ENCODE measurements at regions of chr16 and their contacts with region 1.

Region 1: GRCh38 chr16:88856828-88857733 is at the starts of genes GALNS and TRAPPC2L:
- DNase-seq: peak; percentile 98
- H3K4me3 Mint-ChIP-seq: peak within 1 kb of the TSS; percentile 96
- H3K27ac Mint-ChIP-seq: peak within 1 kb of the TSS; percentile 88
- H3K4me1 Mint-ChIP-seq: peaks cover 25% of the 10 kb centered on the region
- H3K27me3 Mint-ChIP-seq: no peaks in the 10 kb centered on the region
- total RNA-seq, gene GALNS: 21.9 and 23.8 TPM in 2 replicates
- total RNA-seq, gene TRAPPC2L: 63.1 and 65.4 TPM in 2 replicates

Region 2: DNA sequence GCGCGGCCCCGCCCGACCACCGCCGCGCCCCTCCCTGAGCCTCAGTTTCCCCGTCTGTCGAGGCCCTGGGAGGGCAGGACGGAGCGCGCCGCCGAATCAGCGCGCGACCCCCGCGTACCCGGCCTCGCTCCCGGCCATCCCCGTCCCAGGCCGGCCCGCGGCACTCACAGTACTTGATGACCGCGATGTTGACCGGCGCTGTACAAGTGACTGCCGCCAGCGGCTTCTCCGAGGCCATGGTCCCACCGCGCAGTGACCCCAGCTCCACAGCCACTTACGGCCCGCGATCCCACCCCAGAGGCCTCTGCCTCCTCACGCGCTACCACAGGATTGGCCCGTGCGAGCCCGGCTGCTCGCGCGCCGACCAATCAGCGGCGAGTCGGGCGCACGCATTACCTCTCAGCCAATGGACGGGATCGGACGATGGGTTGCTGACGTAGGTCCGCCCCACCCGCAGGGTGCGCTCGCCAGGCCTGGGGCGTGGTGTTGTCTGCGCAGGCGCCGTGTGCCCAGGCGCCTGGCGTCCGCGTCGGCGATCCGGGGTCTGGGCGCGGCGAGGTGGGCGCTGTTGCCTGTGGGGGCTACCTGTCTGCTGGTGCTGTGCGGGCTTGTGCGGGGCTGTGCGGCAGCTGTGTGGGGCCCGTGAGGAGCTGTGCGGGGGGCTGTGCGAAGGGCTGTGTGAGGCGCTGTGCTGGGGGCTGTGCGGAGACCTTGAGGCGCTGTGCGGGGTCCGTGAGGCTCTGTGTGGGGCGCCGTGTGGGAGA is 194.1 kb before region 1 on chr16 and contains the start of gene MVD:
- intact Hi-C with region 1: loop called (anchors 5 kb)
- DNase-seq: peak; percentile 96
- H3K4me3 Mint-ChIP-seq: peak within 1 kb of the TSS; percentile 88
- H3K27ac Mint-ChIP-seq: peak within 1 kb of the TSS; percentile 84
- H3K4me1 Mint-ChIP-seq: peaks cover 20% of the 10 kb centered on the region
- H3K27me3 Mint-ChIP-seq: no peaks in the 10 kb centered on the region
- total RNA-seq, gene MVD: 88.8 and 90.0 TPM in 2 replicates

Region 3: DNA sequence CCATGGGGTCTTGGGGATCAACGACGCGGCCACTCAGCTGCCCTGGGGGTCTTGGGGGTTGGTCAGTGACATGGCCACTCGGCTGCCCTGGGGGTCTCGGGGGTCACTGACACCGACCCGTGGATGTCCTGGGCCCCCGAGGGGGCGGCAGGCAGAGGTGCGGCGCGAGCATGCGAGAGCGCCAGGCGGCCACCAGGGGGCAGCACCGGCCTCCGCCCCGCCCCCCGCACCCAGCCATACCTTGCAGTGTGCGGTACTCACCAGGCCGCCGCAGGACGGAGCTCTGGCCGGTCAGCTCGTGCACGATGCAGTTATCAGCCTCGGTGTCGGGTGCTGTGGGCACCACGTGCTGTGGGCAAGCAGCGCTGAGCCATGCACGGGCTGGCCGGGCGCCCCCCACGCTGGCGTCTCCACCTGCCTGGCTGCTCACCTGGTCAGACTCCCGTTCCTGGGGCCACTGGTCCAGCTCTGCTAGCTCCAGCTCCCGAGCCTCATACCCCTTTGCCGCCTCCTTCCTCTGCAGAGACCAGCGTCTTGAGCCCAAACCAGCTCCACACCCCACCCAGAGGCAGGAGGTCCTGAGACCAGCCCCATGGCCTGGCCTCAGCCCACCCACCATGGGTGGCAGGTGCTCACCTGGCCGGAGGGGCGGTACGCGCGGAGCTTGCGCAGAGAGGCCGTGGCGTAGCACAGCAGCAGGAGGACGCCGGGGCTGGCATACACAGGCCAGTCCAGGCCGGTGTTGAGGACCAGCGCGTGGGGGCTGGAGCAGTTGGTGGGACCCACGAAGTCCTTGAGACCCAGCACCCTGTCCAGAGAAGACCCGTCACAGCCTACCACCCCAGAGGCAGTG is 119.6 kb before region 1 on chr16:
- intact Hi-C with region 1: loop called (anchors 1 kb)
- DNase-seq: peak; percentile 49
- H3K4me3 Mint-ChIP-seq: no peak overlapping the region
- H3K27ac Mint-ChIP-seq: no peak overlapping the region
- H3K4me1 Mint-ChIP-seq: no peaks in the 10 kb centered on the region
- H3K27me3 Mint-ChIP-seq: no peaks in the 10 kb centered on the region

Region 4: DNA sequence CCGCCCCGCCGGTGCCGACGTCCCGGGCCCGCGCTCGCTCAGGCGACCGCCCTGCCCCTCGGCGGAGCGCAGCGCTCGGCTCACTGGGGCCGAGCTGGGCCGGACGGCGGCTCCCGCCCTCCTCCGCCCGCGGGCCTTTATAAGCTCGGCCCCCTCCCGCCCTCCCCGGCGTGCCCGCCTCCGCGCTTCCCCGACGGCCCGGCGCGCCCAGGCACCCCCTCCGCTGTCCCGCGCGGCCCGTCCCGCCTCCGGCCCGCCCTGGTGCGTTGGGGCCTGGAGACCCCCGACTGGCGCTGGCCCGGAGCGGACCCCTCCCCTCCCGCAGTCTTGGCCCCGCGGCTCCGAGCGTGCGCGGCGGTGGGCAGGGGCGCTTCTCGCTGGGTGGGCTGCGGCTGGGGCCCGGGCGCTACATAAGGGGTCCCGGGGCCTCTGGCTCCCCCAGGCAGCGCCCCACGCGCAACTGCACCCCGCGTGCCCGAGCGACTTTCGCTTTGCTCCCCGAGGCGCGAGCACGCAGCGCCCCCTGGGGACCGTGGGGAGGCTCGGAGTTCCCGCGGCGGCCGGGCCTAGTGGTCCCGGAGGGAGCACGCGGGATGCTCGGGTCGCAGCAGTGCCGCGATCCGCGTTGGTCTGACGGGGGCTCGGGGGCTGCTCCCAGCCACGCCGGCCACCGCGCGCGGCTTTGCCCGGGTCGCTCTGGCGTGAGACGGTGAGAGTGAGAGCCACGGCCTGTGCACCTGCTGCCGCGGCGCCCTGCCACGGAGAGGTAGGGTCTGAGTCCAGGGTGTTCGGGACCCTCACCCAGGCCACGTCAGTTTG is 71.8 kb before region 1 on chr16 and contains the start of gene PIEZO1:
- intact Hi-C with region 1: loop called (anchors 1 kb)
- DNase-seq: peak; percentile 80
- H3K4me3 Mint-ChIP-seq: peak within 1 kb of the TSS; percentile 82
- H3K27ac Mint-ChIP-seq: peak within 1 kb of the TSS; percentile 87
- H3K4me1 Mint-ChIP-seq: peaks cover 43% of the 10 kb centered on the region
- H3K27me3 Mint-ChIP-seq: peaks cover 4% of the 10 kb centered on the region
- total RNA-seq, gene PIEZO1: 214 and 217 TPM in 2 replicates

Region 5: DNA sequence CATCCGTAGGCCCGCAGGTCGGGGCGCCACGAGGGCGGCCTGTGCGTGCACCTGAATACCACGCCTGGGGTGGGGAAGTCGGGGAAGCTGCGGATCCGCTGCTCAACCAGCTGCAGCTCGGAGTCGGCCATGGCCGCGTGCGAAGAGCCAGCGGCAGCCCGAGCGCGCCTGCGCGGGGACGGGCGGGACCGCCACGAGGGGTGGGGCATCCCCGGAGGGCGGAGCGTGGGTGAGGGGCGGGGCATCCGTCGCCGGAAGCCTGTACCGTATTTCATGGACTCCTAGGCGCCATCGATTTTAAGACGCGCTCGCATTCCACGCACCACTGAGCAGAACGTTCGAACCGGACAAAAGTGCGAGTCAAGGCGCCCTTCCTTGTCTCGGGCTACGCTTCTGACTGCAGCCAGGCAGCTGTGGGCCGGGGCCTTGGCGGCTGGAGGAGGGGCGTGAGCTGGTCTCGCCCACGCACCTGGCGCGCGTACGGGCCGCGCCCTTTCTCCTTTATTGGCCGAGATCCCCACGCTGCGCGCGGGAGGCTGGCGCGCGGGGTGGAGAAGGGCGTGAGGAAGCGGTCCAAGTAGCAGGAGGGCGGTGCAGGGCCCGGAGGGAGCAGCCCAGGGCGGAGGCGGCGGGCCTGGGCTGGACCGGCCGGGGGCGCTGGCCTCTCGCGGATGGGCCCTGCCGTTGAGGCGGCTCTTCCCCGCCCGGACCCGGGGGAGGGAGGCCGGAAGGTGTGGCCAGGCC is 45.1 kb before region 1 on chr16 and contains the start of gene APRT:
- intact Hi-C with region 1: loop called (anchors 1 kb)
- DNase-seq: peak; percentile 97
- H3K4me3 Mint-ChIP-seq: peak within 1 kb of the TSS; percentile 90
- H3K27ac Mint-ChIP-seq: peak within 1 kb of the TSS; percentile 98
- H3K4me1 Mint-ChIP-seq: peaks cover 11% of the 10 kb centered on the region
- H3K27me3 Mint-ChIP-seq: no peaks in the 10 kb centered on the region
- total RNA-seq, gene APRT: 301 and 303 TPM in 2 replicates

Region 6: GRCh38 chr16:89115216-89115861 is 258.3 kb after region 1 on chr16:
- intact Hi-C with region 1: loop called (anchors 1 kb)
- DNase-seq: peak; percentile 83
- H3K4me3 Mint-ChIP-seq: peak overlapping the region; percentile 79
- H3K27ac Mint-ChIP-seq: peak overlapping the region; percentile 90
- H3K4me1 Mint-ChIP-seq: peaks cover 29% of the 10 kb centered on the region
- H3K27me3 Mint-ChIP-seq: no peaks in the 10 kb centered on the region

Region 7: GRCh38 chr16:89490387-89491237 is 633.5 kb after region 1 on chr16 and contains the start of gene ANKRD11:
- intact Hi-C with region 1: loop called (anchors 2 kb)
- DNase-seq: peak; percentile 99
- H3K4me3 Mint-ChIP-seq: peak within 1 kb of the TSS; percentile 96
- H3K27ac Mint-ChIP-seq: peak within 1 kb of the TSS; percentile 99
- H3K4me1 Mint-ChIP-seq: peaks cover 52% of the 10 kb centered on the region
- H3K27me3 Mint-ChIP-seq: no peaks in the 10 kb centered on the region
- total RNA-seq, gene ANKRD11: 176 and 179 TPM in 2 replicates

Measured in activated T-helper 1 cell treated with anti-CD3 and anti-CD28 coated beads, Interleukin-12 subunit alpha, Interleukin-12 subunit beta, Interleukin-2, Interleukin-4 antibody, amounts not matched to agents 30 ng/mL and 10 ng/mL and 1 ng/mL, durations not matched to agents 14 hours and 24 hours and 36 hours (primary cell).